A549 (cell line): ENCODE measurements at regions of chr1 and their contacts with region 1.

Region 1: DNA sequence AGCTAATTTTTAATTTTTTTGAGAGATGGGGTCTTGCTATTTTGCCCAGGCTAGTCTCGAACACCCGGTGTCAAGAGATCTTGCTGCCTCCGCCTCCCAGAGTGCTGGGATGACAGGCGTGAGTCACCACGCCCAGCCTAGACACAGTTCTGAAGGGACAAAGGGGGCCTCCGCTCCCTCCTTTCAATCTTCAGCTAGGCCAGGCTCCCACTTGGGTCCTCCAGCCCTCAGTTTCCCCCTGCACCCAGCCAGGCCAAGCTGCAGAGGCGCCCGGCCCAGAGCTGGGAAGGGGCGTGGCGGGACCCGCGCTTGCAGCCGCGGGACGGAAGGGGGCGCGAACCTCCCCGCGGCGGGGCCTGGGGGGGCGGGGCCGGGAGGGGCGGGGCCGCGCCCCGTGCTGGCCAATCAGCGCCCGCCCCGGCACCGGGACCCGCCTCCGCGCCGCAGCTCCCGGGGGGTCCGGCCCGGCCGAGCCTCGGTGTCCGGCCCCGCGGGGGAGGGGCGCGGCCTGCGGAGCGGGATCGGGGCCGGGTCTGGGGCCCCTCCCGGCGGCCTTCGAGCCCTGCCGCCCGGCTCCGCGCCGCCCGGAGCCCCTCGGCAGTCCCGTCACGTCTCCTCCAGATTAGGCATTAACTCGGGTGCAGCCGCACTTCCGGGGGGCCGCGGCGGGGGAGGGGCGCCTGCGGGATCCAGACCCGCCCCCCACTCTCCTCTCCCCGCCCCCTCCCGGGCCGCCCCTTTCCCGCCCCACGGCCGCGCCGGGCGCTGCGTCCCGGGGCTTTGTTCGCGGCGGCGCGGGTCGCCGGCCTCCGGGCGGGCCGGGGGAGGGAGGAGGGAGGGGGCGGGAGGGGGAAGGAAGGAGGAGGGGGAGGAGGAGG is 559 bp upstream of the AGRN start:
- DNase-seq: peak in 1 of 2 experiments; percentile 87
- ATAC-seq: peak; percentile 59
- H3K4me3 ChIP-seq: peak overlapping the region; percentile 86
- H3K27ac ChIP-seq: peak overlapping the region; percentile 98
- H3K4me1 ChIP-seq: peaks cover 33% of the 10 kb centered on the region
- CTCF ChIP-seq: peak; percentile 42; the same call in 2 of the 3 replicates
- EP300 ChIP-seq: peak in 1 of 2 experiments; percentile 30; a peak in 1 of 5 replicates
- POLR2A ChIP-seq: no peak
- RAD21 ChIP-seq: no peak; a peak in 1 of 5 replicates

Region 2: GRCh38 chr1:999725-1000356 is 19.5 kb before region 1 on chr1 and contains the start of gene HES4:
- CTCF ChIA-PET with region 1: interaction called, 52 read pairs
- POLR2A ChIA-PET with region 1: interaction called, 5 read pairs
- DNase-seq: peak in 1 of 2 experiments; percentile 92
- ATAC-seq: peak; percentile 51 to 52
- H3K4me3 ChIP-seq: peak within 1 kb of the TSS; percentile 77
- H3K27ac ChIP-seq: peak within 1 kb of the TSS; percentile 97 to 100
- H3K4me1 ChIP-seq: peaks cover 17% of the 10 kb centered on the region
- CTCF ChIP-seq: no peak
- EP300 ChIP-seq: no peak
- POLR2A ChIP-seq: peak; percentile 86
- RAD21 ChIP-seq: no peak
- polyA plus RNA-seq, gene HES4: 4.2 and 5.9 TPM in 2 replicates